ENCODE measurements at regions of chr17 and their contacts with region 1.

Region 1: GRCh38 chr17:77772461-77772897 is 186.0 kb upstream of the TNRC6C start:
- DNase-seq: peak; percentile 59 to 63 (median 60)
- H3K4me3 ChIP-seq: no peak overlapping the region
- H3K4me3 Mint-ChIP-seq: peak overlapping the region in 2 of 8 donors; percentile 0 to 47
- H3K27ac ChIP-seq: no peak overlapping the region
- H3K27ac Mint-ChIP-seq: peak overlapping the region in 3 of 7 donors; percentile 38 to 57 (median 38)
- H3K4me1 ChIP-seq: peaks cover 8% of the 10 kb centered on the region
- H3K4me1 Mint-ChIP-seq: peaks cover 7 to 20% (median 14%) of the 10 kb centered on the region in 4 donors
- H3K27me3 ChIP-seq: no peaks in the 10 kb centered on the region
- H3K27me3 Mint-ChIP-seq: peaks cover 1 to 2% of the 10 kb centered on the region in 2 donors

Region 2: GRCh38 chr17:77842528-77843147 is 70.2 kb after region 1 on chr17:
- CTCF ChIA-PET with region 1: no interaction called
- POLR2A ChIA-PET with region 1: no interaction called
- intact Hi-C with region 1: loop called (anchors 10 kb)
- DNase-seq: no peak
- H3K4me3 ChIP-seq: no peak overlapping the region
- H3K4me3 Mint-ChIP-seq: peak overlapping the region in 7 of 8 donors; percentile 4 to 85 (median 69)
- H3K27ac ChIP-seq: no peak overlapping the region
- H3K27ac Mint-ChIP-seq: peak overlapping the region; percentile 87 to 97 (median 93)
- H3K4me1 ChIP-seq: peaks cover 63% of the 10 kb centered on the region
- H3K4me1 Mint-ChIP-seq: peaks cover 34 to 74% (median 43%) of the 10 kb centered on the region in 4 donors
- H3K27me3 ChIP-seq: no peaks in the 10 kb centered on the region
- H3K27me3 Mint-ChIP-seq: no peaks in the 10 kb centered on the region

Region 3: DNA sequence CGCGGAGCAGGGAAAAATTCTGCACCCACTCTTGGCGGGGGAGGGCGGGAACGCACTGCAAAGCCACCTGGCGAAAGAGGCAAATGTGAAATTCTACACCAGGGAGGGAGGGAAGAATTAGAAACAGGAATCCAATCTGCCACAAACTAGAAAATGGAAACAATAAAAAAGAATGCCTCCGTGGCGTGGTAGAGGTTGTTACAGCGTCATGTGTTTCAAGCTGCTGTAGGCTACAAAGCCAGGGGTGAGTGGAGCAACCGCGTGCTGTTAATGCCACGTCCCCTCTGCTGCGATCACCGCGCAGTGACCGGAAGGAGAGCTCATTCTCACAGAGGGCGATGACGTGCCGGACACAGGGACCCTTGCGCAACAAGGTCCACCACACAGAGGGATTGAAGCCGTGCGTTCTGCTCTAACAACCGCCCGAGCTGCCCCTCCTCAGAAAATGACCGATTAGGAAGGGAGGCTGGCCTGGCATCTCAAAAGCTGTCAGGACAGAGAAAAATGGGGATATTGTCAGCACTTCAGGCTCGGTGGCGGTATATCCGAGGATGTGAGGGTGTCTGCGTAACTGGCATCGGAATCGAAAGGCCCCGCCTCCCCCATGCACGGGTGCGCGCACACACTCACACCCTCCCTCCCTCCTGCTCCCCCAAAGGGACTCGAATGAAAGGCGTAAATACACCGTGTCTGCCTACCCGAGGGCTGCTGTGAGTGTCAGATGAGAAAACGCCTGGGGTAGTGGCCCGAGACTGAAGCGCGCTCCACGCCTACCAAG is 115.2 kb after region 1 on chr17:
- CTCF ChIA-PET with region 1: no interaction called
- POLR2A ChIA-PET with region 1: interaction called, 4 read pairs
- intact Hi-C with region 1: loop called (anchors 1 kb)
- DNase-seq: peak; percentile 81 to 92 (median 85)
- H3K4me3 ChIP-seq: peak overlapping the region; percentile 67 to 86
- H3K4me3 Mint-ChIP-seq: peak overlapping the region; percentile 91 to 96 (median 93)
- H3K27ac ChIP-seq: peak overlapping the region; percentile 95
- H3K27ac Mint-ChIP-seq: peak overlapping the region; percentile 93 to 100 (median 99)
- H3K4me1 ChIP-seq: peaks cover 47% of the 10 kb centered on the region
- H3K4me1 Mint-ChIP-seq: peaks cover 45 to 55% (median 52%) of the 10 kb centered on the region in 4 donors
- H3K27me3 ChIP-seq: no peaks in the 10 kb centered on the region
- H3K27me3 Mint-ChIP-seq: no peaks in the 10 kb centered on the region

Region 4: DNA sequence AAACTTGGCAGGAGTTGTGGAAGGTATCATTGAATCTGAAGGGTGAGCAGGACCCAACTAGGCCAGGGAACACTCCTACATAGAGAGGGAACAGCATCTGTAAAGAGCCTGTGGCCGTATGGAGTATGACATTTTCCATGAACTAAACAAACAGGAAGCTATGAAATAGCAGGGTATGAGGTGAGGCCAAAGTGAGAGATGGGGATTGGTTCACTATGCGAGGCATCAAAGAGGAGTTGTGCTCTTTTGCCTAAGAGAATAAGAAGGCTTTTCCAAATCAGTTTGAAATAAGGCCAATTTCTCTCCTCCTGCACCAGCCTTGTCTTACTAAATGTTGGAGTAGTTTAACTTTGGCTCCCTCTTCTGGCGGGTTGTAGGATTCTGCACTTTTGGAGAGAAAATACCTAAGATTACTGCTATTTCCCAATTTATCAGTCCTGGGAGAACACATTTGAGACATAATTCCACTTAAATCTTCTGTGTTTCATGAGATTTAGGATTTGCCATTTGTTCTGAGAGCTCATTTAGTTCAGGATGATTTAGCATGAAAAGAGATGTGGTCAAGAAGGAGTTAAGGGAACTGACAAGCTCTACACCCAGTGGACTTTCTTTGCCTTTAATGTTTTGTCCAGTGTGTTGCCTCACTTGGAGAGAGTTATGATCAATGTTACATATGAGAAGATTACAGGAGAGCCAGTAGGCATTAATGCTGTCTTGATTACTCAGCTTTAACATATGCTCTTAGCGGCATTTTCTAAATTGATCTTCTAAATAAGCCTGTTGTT is 241.4 kb after region 1 on chr17:
- CTCF ChIA-PET with region 1: interaction called, 111 read pairs
- POLR2A ChIA-PET with region 1: interaction called, 3 read pairs
- intact Hi-C with region 1: loop called (anchors 1 kb)
- DNase-seq: peak; percentile 54 to 62 (median 60)
- H3K4me3 ChIP-seq: no peak overlapping the region
- H3K4me3 Mint-ChIP-seq: no peak overlapping the region
- H3K27ac ChIP-seq: no peak overlapping the region
- H3K27ac Mint-ChIP-seq: peak overlapping the region; percentile 3 to 65 (median 30)
- H3K4me1 ChIP-seq: peaks cover 11% of the 10 kb centered on the region
- H3K4me1 Mint-ChIP-seq: peaks cover 21 to 44% (median 29%) of the 10 kb centered on the region in 4 donors
- H3K27me3 ChIP-seq: no peaks in the 10 kb centered on the region
- H3K27me3 Mint-ChIP-seq: no peaks in the 10 kb centered on the region

Measured in CD4-positive, alpha-beta memory T cell (primary cell).